Activated naive CD4-positive, alpha-beta T cell treated with anti-CD3 and anti-CD28 coated beads, Interleukin-2, amount 10 ng/mL, durations not matched to agents 7 days and 5 days (primary cell): ENCODE measurements at regions of chr10 and their contacts with region 1.

Region 1: GRCh38 chr10:91632671-91633550 is at the start of gene PPP1R3C:
- DNase-seq: peak; percentile 65
- H3K4me3 Mint-ChIP-seq: peak within 1 kb of the TSS; percentile 59
- H3K27ac Mint-ChIP-seq: no peak within 1 kb of the TSS
- H3K4me1 Mint-ChIP-seq: peaks cover 9% of the 10 kb centered on the region
- H3K27me3 Mint-ChIP-seq: peaks cover 57% of the 10 kb centered on the region

Region 2: GRCh38 chr10:91389636-91390512 is 243.0 kb before region 1 on chr10:
- CTCF ChIA-PET with region 1: interaction called, 31 read pairs
- DNase-seq: no peak
- H3K4me3 Mint-ChIP-seq: no peak overlapping the region
- H3K27ac Mint-ChIP-seq: no peak overlapping the region
- H3K4me1 Mint-ChIP-seq: peaks cover 6% of the 10 kb centered on the region
- H3K27me3 Mint-ChIP-seq: peaks cover 8% of the 10 kb centered on the region

Region 3: DNA sequence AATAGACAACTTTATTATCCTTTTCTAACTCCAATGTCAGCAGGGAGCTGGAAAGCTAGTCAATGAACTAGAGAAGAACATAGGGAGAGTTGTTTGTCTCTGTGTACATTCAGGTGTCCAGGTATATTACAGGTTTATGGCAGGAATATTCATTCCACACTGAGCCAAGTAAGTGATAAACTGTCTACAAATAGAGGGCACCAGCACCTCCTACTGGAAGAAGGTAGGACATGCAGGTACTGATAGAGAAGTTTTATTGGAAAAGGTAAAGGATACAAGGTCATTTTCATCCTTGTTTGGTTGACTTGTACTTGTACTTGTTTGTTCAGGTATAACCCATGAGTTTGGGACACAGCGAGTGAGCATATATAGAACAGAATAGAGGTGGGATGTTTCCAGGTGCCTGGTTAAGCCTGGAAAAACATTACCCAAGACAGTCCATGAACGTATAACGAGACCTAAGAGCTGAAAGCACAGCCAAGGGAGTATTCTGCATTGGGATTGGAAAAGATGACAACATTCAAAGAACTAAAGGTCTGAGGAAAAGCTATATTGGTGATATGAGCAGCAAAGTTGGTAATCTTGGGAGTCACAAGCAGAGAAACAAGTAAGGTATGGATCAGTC is 61.4 kb after region 1 on chr10:
- CTCF ChIA-PET with region 1: interaction called, 18 read pairs
- DNase-seq: peak; percentile 22
- H3K4me3 Mint-ChIP-seq: no peak overlapping the region
- H3K27ac Mint-ChIP-seq: no peak overlapping the region
- H3K4me1 Mint-ChIP-seq: peaks cover 5% of the 10 kb centered on the region
- H3K27me3 Mint-ChIP-seq: no peaks in the 10 kb centered on the region

Region 4: GRCh38 chr10:91788220-91788924 is 155.5 kb after region 1 on chr10:
- CTCF ChIA-PET with region 1: no interaction called
- DNase-seq: no peak
- H3K4me3 Mint-ChIP-seq: no peak overlapping the region
- H3K27ac Mint-ChIP-seq: no peak overlapping the region
- H3K4me1 Mint-ChIP-seq: no peaks in the 10 kb centered on the region
- H3K27me3 Mint-ChIP-seq: no peaks in the 10 kb centered on the region